Mucosa of descending colon (tissue), 3 donors: ENCODE measurements at regions of chr10 and their contacts with region 1.

Region 1: DNA sequence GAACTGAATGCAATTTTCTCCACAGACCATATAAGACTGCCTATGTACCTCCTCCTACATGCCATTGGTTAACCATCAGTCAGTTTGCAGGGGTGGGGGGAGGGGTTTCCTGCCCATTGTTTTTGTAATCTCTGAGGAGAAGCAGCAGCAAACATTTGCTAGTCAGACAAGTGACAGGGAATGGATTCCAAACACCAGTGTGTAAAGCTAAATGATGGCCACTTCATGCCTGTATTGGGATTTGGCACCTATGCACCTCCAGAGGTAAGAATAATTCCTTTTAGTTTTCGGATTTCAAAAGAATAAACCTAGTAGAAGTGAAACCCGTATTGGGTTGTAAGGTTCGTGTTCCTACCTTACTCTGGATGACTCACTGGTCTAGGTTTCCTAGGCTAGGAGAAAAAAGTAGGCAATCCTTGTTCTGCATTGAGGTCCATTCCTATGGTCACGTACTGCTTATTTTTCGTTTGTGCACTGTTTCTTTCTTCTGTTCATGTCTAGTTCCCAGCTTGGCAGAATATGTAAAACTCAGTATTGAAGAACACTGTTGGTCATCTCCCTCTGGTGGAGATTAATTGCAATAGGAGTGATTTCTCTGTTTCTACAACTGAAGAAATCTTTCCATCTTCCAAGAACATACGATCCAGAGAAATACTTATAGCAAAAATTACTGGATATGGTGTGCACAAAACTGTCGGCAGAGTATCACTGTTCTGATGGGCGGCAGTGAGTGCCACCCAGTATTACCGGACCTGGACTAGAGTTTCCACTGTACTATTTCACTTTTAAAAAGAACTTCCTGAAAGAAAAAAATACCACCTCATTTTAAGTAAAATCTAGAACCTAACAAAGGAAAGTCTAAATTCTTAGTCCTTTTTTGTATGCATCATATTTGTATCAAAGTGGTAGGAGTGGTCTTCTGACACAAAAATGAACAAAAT is at the start of gene AKR1C3:
- DNase-seq: peak in 1 of 3 donors; percentile 29
- ATAC-seq: peak; percentile 87
- H3K4me3 ChIP-seq: peak within 1 kb of the TSS; percentile 15
- H3K4me1 ChIP-seq: peaks cover 5% of the 10 kb centered on the region
- CTCF ChIP-seq: peak; percentile 60
- total RNA-seq, gene AKR1C3: 110 to 384 (median 308) TPM

Region 2: GRCh38 chr10:5023177-5023805 is 71.2 kb before region 1 on chr10:
- intact Hi-C with region 1: loop called in 1 of 2 experiments (anchors 10 kb)
- DNase-seq: peak; percentile 58 to 74 (median 59)
- ATAC-seq: peak; percentile 84
- H3K4me3 ChIP-seq: no peak overlapping the region
- H3K4me1 ChIP-seq: peaks cover 22% of the 10 kb centered on the region
- CTCF ChIP-seq: no peak